Panc1 (cell line): ENCODE measurements at regions of chr7 and their contacts with region 1.

Region 1: GRCh38 chr7:75866489-75867389 is 12.1 kb upstream of the RHBDD2 start:
- DNase-seq: peak; percentile 75
- ATAC-seq: peak; percentile 93
- H3K4me3 ChIP-seq: peak overlapping the region in 1 of 2 experiments; percentile 8; a peak in 1 of 4 replicates
- H3K27ac ChIP-seq: no peak overlapping the region
- H3K4me1 ChIP-seq: 0 out of 2 replicates have a peak, but pooled peaks cover 3% of the 10 kb centered on the region
- H3K27me3 ChIP-seq: no peaks in the 10 kb centered on the region
- CTCF ChIP-seq: peak; percentile 98

Region 2: GRCh38 chr7:76020031-76020714 is 153.4 kb after region 1 on chr7:
- CTCF ChIA-PET with region 1: interaction called, 9 read pairs
- POLR2A ChIA-PET with region 1: no interaction called
- in situ Hi-C with region 1: no loop called
- intact Hi-C with region 1: loop called (anchors 1 kb)
- DNase-seq: peak; percentile 48
- ATAC-seq: peak; percentile 90
- H3K4me3 ChIP-seq: no peak overlapping the region
- H3K27ac ChIP-seq: no peak overlapping the region
- H3K4me1 ChIP-seq: no peaks in the 10 kb centered on the region
- H3K27me3 ChIP-seq: no peaks in the 10 kb centered on the region
- CTCF ChIP-seq: peak; percentile 88

Region 3: DNA sequence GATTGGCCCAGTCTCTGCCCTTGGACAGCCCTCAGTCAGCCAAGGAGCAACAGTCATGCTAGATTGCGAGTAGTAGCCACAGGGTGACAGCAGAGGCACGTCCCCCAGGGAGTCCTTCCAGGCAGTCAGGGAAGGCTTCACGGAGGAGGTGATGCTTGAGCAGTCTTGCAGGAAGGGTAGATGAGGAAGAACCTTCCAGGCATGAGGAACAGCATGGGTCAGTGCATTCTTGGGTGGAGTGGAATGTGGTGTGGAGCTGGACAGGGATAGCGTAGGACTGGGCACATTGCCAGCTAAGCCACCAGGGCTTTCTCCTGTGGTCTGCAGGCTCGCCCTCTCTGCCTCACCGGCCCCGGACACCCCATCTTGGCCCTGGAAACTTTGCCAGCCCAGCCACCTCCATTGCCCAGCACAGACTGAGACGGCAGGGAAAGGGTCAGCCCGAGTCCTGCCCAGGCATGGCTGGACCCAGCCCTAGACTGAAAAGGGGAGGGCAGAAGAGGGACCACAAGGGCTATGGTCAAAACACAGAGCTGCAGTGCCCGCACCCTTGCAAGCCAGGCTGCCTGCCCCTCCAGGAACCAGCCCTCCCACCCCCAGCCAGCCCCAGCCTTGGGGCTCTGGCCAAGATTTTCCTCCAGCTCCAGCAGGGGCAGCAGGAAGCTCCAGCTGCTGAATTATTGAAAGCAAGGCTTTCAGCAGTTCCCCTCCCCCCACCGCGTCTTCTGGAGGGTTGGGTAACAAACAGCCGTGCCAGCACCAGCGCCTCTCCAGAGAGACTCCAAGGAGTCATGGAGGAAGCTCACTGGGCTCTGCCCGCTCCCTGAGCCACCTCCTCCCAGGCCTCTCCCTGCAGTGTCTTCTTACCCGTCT is 353.7 kb after region 1 on chr7:
- CTCF ChIA-PET with region 1: no interaction called
- POLR2A ChIA-PET with region 1: interaction called, 18 read pairs
- in situ Hi-C with region 1: no loop called
- intact Hi-C with region 1: no loop called
- DNase-seq: no peak
- ATAC-seq: peak; percentile 61
- H3K4me3 ChIP-seq: no peak overlapping the region
- H3K27ac ChIP-seq: no peak overlapping the region
- H3K4me1 ChIP-seq: peaks cover 5% of the 10 kb centered on the region; the same call in 1 of the 2 replicates
- H3K27me3 ChIP-seq: no peaks in the 10 kb centered on the region; the same call in 1 of the 2 replicates
- CTCF ChIP-seq: no peak; the same call in 1 of the 2 replicates

Region 4: GRCh38 chr7:76260171-76260703 is 393.5 kb after region 1 on chr7:
- CTCF ChIA-PET with region 1: no interaction called
- POLR2A ChIA-PET with region 1: no interaction called
- in situ Hi-C with region 1: no loop called
- intact Hi-C with region 1: no loop called
- DNase-seq: no peak
- ATAC-seq: peak; percentile 68
- H3K4me3 ChIP-seq: peak overlapping the region; percentile 30 to 36
- H3K27ac ChIP-seq: no peak overlapping the region
- H3K4me1 ChIP-seq: no peaks in the 10 kb centered on the region; the same call in 1 of the 2 replicates
- H3K27me3 ChIP-seq: no peaks in the 10 kb centered on the region
- CTCF ChIP-seq: no peak